ENCODE measurements at regions of chr2 and their contacts with region 1.

Region 1: GRCh38 chr2:145744541-145745386 is 1224.8 kb upstream of the ZEB2 start:
- H3K4me3 Mint-ChIP-seq: no peak overlapping the region
- H3K27ac Mint-ChIP-seq: peak overlapping the region; percentile 39
- H3K4me1 Mint-ChIP-seq: peaks cover 62% of the 10 kb centered on the region
- H3K27me3 Mint-ChIP-seq: no peaks in the 10 kb centered on the region

Region 2: GRCh38 chr2:145598434-145598833 is 146.3 kb before region 1 on chr2:
- intact Hi-C with region 1: loop called (anchors 5 kb)
- H3K4me3 Mint-ChIP-seq: no peak overlapping the region
- H3K27ac Mint-ChIP-seq: no peak overlapping the region
- H3K4me1 Mint-ChIP-seq: peaks cover 41% of the 10 kb centered on the region
- H3K27me3 Mint-ChIP-seq: no peaks in the 10 kb centered on the region